ENCODE measurements at regions of chr20 and their contacts with region 1.

Region 1: GRCh38 chr20:26208296-26209091 is 511.8 kb upstream of the ZNF337 start:
- DNase-seq: peak; percentile 26 to 84 (median 58)
- ATAC-seq: peak; percentile 91
- H3K4me3 ChIP-seq: peak overlapping the region; percentile 50
- H3K4me3 Mint-ChIP-seq: no peak overlapping the region
- H3K27ac ChIP-seq: no peak overlapping the region
- H3K27ac Mint-ChIP-seq: no peak overlapping the region
- H3K4me1 ChIP-seq: peaks cover 18% of the 10 kb centered on the region
- H3K4me1 Mint-ChIP-seq: peaks cover 21% of the 10 kb centered on the region
- H3K27me3 ChIP-seq: peaks cover 5 to 6% of the 10 kb centered on the region in 2 experiments
- H3K27me3 Mint-ChIP-seq: peaks cover 28% of the 10 kb centered on the region
- CTCF ChIP-seq: no peak

Region 2: GRCh38 chr20:26276554-26277210 is 68.2 kb after region 1 on chr20:
- CTCF ChIA-PET with region 1: no interaction called
- POLR2A ChIA-PET with region 1: no interaction called
- intact Hi-C with region 1: loop called in 1 of 2 experiments (anchors 10 kb)
- DNase-seq: peak in 1 of 14 experiments; percentile 4
- ATAC-seq: no peak
- H3K4me3 ChIP-seq: no peak overlapping the region
- H3K4me3 Mint-ChIP-seq: no peak overlapping the region
- H3K27ac ChIP-seq: no peak overlapping the region
- H3K27ac Mint-ChIP-seq: no peak overlapping the region
- H3K4me1 ChIP-seq: peaks cover 5% of the 10 kb centered on the region
- H3K4me1 Mint-ChIP-seq: peaks cover 39% of the 10 kb centered on the region
- H3K27me3 ChIP-seq: no peaks in the 10 kb centered on the region
- H3K27me3 Mint-ChIP-seq: no peaks in the 10 kb centered on the region
- CTCF ChIP-seq: no peak